OCI-LY7 (cell line): ENCODE measurements at regions of chr15 and their contacts with region 1.

Region 1: DNA sequence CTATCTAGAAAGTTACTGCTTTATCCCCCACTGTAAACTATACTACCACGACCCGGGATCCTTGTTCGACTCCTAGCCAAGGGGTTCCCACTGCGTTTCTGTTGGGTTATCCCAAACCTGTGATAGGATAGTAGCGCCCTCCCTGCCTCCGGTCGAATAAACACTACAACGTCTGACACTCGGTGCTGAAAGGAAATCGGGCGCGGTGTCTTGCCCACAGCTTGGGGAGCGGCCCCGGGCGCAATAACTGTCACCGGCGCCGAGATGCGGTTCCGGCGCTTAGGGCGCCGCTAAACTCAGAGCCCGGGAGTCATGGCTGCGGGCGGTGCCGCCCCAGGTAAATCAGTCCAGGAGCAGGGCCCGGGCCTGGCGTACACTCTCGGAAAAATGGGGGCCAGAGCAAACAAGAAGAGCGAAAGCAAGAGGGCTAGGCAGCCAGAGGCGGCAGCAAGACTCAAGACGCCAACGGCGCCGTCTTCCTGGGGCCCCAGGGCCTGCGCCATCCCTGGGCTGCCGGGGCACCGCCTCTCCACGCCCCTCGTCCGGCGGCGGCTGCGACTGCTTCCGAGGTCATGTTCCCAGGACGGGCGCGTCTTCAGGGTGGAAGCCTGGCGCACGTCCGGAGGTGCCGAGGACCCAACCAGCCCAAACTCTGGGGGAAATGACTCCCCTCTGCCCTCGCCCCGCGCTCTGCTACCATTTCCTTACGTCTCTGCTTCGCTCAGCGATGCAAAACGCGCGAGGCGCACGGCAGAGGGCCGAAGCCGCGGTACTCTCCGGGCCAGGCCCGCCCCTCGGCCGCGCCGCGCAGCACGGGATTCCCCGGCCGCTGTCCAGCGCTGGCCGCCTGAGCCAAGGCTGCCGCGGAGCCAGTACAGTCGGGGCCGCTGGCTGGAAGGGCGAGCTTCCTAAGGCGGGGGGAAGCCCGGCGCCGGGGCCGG is at the start of gene DUT:
- DNase-seq: peak; percentile 86
- H3K4me3 ChIP-seq: peak within 1 kb of the TSS; percentile 81
- H3K27ac ChIP-seq: peak within 1 kb of the TSS; percentile 83
- H3K4me1 ChIP-seq: peaks cover 57% of the 10 kb centered on the region
- CTCF ChIP-seq: peak; percentile 65
- total RNA-seq, gene DUT: 131 and 137 TPM in 2 replicates

Region 2: GRCh38 chr15:47820780-47821319 is 510.3 kb before region 1 on chr15:
- CTCF ChIA-PET with region 1: no interaction called
- POLR2A ChIA-PET with region 1: no interaction called
- intact Hi-C with region 1: no loop called
- DNase-seq: no peak
- H3K4me3 ChIP-seq: no peak overlapping the region
- H3K27ac ChIP-seq: no peak overlapping the region
- H3K4me1 ChIP-seq: no peaks in the 10 kb centered on the region
- CTCF ChIP-seq: no peak

Region 3: GRCh38 chr15:48177766-48178647 is 153.1 kb before region 1 on chr15 and contains the start of gene MYEF2:
- CTCF ChIA-PET with region 1: no interaction called
- POLR2A ChIA-PET with region 1: interaction called, 4 read pairs
- intact Hi-C with region 1: loop called (anchors 2 kb)
- DNase-seq: peak; percentile 90
- H3K4me3 ChIP-seq: peak within 1 kb of the TSS; percentile 84
- H3K27ac ChIP-seq: peak within 1 kb of the TSS; percentile 78
- H3K4me1 ChIP-seq: peaks cover 39% of the 10 kb centered on the region
- CTCF ChIP-seq: no peak
- total RNA-seq, gene MYEF2: 44.0 and 57.1 TPM in 2 replicates

Region 4: GRCh38 chr15:48810414-48811317 is 479.5 kb after region 1 on chr15 and contains the start of gene CEP152:
- CTCF ChIA-PET with region 1: no interaction called
- POLR2A ChIA-PET with region 1: interaction called, 3 read pairs
- intact Hi-C with region 1: loop called (anchors 5 kb)
- DNase-seq: peak; percentile 100
- H3K4me3 ChIP-seq: peak within 1 kb of the TSS; percentile 94
- H3K27ac ChIP-seq: peak within 1 kb of the TSS; percentile 78
- H3K4me1 ChIP-seq: peaks cover 39% of the 10 kb centered on the region
- CTCF ChIP-seq: no peak
- total RNA-seq, gene CEP152: 37.6 and 68.2 TPM in 2 replicates

Region 5: DNA sequence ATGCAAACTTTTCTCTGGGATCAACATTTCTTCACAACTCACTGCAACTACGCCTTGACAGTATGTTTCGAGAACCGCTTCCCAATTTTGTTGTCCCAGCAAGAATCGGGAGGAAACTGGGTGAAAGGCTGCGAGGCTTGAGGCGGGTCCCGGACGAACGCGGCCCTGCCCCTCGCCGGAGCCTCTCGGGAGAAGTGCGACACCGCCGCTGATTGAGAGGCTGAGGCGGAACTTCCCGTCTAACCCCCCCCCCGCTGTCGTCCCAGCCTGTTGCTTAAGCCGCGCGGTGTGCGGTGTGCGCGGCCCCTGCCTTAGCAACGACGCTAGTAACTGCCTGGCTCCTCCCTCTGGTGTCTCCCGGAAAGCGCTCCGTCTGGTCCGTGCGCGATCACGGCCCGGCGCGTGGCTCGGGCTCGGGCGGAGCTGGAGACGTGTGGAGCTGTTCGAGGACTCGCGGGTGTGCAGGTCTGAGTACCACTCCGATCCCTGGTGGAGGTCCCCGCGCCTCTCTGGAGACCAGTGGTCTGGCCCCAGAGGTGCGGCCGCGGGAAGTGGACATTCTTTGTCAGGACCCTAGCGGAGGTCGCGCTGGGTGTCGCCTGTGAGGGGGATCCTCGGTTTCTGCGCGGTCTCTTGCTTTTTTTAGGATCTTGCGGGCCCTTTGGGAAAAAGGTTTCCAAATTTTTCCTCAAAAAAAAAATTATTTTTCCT is 1289.7 kb after region 1 on chr15 and contains the starts of genes DTWD1 and FAM227B:
- CTCF ChIA-PET with region 1: no interaction called
- POLR2A ChIA-PET with region 1: no interaction called
- intact Hi-C with region 1: loop called (anchors 10 kb)
- DNase-seq: peak; percentile 97
- H3K4me3 ChIP-seq: peak within 1 kb of the TSS; percentile 86
- H3K27ac ChIP-seq: peak within 1 kb of the TSS; percentile 54
- H3K4me1 ChIP-seq: peaks cover 17% of the 10 kb centered on the region
- CTCF ChIP-seq: 0 out of 2 replicates have a peak, but pooled peaks have one; percentile 6
- total RNA-seq, gene DTWD1: 6.8 and 9.4 TPM in 2 replicates
- total RNA-seq, gene FAM227B: 2.9 and 3.2 TPM in 2 replicates